Activated CD4-positive, alpha-beta memory T cell treated with anti-CD3 and anti-CD28 coated beads, Interleukin-2, amount 10 ng/mL, durations not matched to agents 7 days and 5 days (primary cell): ENCODE measurements at regions of chr15 and their contacts with region 1.

Region 1: GRCh38 chr15:85296615-85297402 is 83.6 kb upstream of the AKAP13 start:
- DNase-seq: peak; percentile 75
- H3K4me3 Mint-ChIP-seq: peak overlapping the region; percentile 3
- H3K27ac Mint-ChIP-seq: no peak overlapping the region
- H3K4me1 Mint-ChIP-seq: peaks cover 20% of the 10 kb centered on the region
- H3K27me3 Mint-ChIP-seq: peaks cover 1% of the 10 kb centered on the region

Region 2: GRCh38 chr15:85312486-85312885 is 15.7 kb after region 1 on chr15:
- CTCF ChIA-PET with region 1: interaction called, 14 read pairs
- POLR2A ChIA-PET with region 1: interaction called, 11 read pairs
- DNase-seq: no peak
- H3K4me3 Mint-ChIP-seq: no peak overlapping the region
- H3K27ac Mint-ChIP-seq: no peak overlapping the region
- H3K4me1 Mint-ChIP-seq: peaks cover 58% of the 10 kb centered on the region
- H3K27me3 Mint-ChIP-seq: no peaks in the 10 kb centered on the region

Region 3: GRCh38 chr15:85318048-85318731 is 21.4 kb after region 1 on chr15:
- CTCF ChIA-PET with region 1: interaction called, 14 read pairs
- POLR2A ChIA-PET with region 1: interaction called, 11 read pairs
- DNase-seq: peak; percentile 58
- H3K4me3 Mint-ChIP-seq: peak overlapping the region; percentile 3
- H3K27ac Mint-ChIP-seq: peak overlapping the region; percentile 82
- H3K4me1 Mint-ChIP-seq: peaks cover 57% of the 10 kb centered on the region
- H3K27me3 Mint-ChIP-seq: no peaks in the 10 kb centered on the region

Region 4: DNA sequence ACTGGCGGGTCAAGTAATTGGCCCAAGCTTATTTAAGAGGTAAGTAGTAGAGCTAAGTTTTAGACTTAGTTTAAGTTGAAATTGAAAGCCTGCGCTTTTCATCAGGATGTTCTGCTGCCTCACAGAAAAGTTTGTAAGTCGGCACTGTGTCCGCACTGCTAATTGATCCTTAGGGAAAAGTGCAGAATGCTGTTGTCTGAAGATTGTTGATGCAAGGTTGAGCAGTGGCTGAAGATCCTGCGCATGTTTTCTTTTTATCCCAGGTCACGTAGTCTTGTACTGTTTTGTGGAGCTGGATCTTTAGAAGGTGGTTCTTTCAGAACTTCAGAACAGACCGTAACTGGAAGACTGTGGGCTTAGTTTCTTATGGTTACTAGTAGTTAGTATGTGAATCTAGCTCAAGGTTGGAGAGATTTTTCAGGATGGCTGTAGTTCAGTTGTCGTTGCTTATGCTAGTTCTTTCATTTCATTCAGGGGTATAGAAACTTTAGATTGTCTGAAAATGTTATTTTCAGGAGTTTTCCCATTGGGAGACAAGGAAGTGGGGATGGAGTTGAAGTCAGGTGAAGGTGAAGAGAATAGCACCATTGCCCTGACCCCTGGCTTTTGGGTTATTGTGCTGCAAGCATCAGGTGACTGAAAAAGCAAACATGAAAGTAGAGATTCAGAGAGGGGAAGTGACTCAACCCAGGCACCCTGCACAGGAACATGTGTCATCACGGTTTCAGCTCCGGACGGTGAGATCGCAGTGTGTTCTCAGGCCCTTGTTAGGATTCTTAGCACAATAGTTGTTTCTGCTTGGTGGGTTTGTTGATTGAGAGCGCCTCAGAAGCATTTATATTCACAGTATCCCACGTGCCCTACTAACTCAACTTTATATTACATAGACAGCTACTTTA is 116.4 kb after region 1 on chr15:
- CTCF ChIA-PET with region 1: interaction called, 81 read pairs
- POLR2A ChIA-PET with region 1: interaction called, 12 read pairs
- DNase-seq: peak; percentile 84
- H3K4me3 Mint-ChIP-seq: peak overlapping the region; percentile 53
- H3K27ac Mint-ChIP-seq: peak overlapping the region; percentile 86
- H3K4me1 Mint-ChIP-seq: peaks cover 67% of the 10 kb centered on the region
- H3K27me3 Mint-ChIP-seq: no peaks in the 10 kb centered on the region

Region 5: GRCh38 chr15:85504749-85505676 is 208.2 kb after region 1 on chr15:
- CTCF ChIA-PET with region 1: interaction called, 21 read pairs
- POLR2A ChIA-PET with region 1: no interaction called
- DNase-seq: peak; percentile 39
- H3K4me3 Mint-ChIP-seq: no peak overlapping the region
- H3K27ac Mint-ChIP-seq: no peak overlapping the region
- H3K4me1 Mint-ChIP-seq: peaks cover 42% of the 10 kb centered on the region
- H3K27me3 Mint-ChIP-seq: no peaks in the 10 kb centered on the region

Region 6: GRCh38 chr15:85821545-85821944 is 524.7 kb after region 1 on chr15:
- CTCF ChIA-PET with region 1: no interaction called
- POLR2A ChIA-PET with region 1: no interaction called
- DNase-seq: no peak
- H3K4me3 Mint-ChIP-seq: no peak overlapping the region
- H3K27ac Mint-ChIP-seq: no peak overlapping the region
- H3K4me1 Mint-ChIP-seq: no peaks in the 10 kb centered on the region
- H3K27me3 Mint-ChIP-seq: peaks cover 9% of the 10 kb centered on the region